A673 (cell line): ENCODE measurements at regions of chr7 and their contacts with region 1.

Region 1: GRCh38 chr7:94657771-94658693 is 2.1 kb upstream of the SGCE start:
- DNase-seq: peak; percentile 97
- H3K4me3 ChIP-seq: peak overlapping the region; percentile 63
- H3K27ac ChIP-seq: no peak overlapping the region
- H3K4me1 ChIP-seq: peaks cover 22% of the 10 kb centered on the region
- H3K27me3 ChIP-seq: no peaks in the 10 kb centered on the region
- CTCF ChIP-seq: no peak

Region 2: GRCh38 chr7:94289071-94289470 is 369.0 kb before region 1 on chr7:
- CTCF ChIA-PET with region 1: interaction called, 6 read pairs
- POLR2A ChIA-PET with region 1: no interaction called
- intact Hi-C with region 1: loop called (anchors 10 kb)
- DNase-seq: peak; percentile 93
- H3K4me3 ChIP-seq: no peak overlapping the region
- H3K27ac ChIP-seq: no peak overlapping the region
- H3K4me1 ChIP-seq: peaks cover 11% of the 10 kb centered on the region
- H3K27me3 ChIP-seq: no peaks in the 10 kb centered on the region
- CTCF ChIP-seq: peak; percentile 97

Region 3: DNA sequence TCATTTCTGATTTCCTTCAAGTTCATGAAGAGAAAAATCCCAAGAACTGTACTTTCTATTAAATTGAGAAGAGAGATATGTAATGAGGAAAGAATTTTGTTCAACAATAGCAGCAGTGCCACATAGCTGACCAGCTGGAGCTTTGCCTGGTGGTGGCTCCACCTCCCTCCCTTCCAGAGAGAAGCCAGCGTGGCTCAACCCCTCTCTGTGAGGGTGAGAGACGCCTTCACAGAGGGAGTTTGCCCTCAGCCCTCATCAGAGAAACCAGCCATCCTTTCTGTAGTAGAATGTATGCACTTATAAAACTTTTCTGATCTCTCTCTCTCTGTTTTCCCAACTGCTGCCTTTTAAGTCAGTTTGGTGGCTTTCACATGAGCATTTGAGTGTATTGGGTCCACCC is 283.8 kb before region 1 on chr7:
- CTCF ChIA-PET with region 1: no interaction called
- POLR2A ChIA-PET with region 1: no interaction called
- intact Hi-C with region 1: no loop called
- DNase-seq: peak; percentile 79
- H3K4me3 ChIP-seq: no peak overlapping the region
- H3K27ac ChIP-seq: peak overlapping the region; percentile 98
- H3K4me1 ChIP-seq: peaks cover 44% of the 10 kb centered on the region
- H3K27me3 ChIP-seq: no peaks in the 10 kb centered on the region
- CTCF ChIP-seq: no peak

Region 4: DNA sequence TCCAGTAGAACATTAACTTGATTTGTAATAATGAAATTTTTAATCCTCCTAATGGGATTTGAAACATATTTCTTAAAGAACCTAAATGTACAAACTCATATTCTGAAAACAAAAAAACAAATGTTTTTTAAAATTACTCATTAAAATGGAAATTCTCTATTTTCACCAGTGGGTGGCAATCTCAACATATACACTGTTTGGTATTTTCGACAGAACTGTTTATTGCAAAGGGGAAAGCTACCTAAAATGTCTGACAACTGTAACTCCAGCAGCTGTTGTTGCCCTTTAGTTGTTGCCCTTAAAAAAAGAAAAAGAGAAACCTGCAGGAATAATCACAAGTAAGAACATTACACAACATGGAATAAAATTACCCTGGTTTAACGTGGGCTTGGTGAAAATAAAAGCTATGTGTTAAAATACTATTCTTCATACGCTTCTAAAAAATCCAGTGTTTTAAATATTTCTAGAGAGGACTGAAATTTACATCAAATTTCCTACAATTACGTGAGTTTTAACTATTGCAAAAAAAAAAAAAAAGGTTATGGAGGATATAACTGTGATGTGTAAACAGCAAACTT is 208.8 kb before region 1 on chr7:
- CTCF ChIA-PET with region 1: interaction called, 10 read pairs
- POLR2A ChIA-PET with region 1: no interaction called
- intact Hi-C with region 1: loop called (anchors 2 kb)
- DNase-seq: peak; percentile 71
- H3K4me3 ChIP-seq: no peak overlapping the region
- H3K27ac ChIP-seq: no peak overlapping the region
- H3K4me1 ChIP-seq: peaks cover 15% of the 10 kb centered on the region
- H3K27me3 ChIP-seq: no peaks in the 10 kb centered on the region
- CTCF ChIP-seq: peak; percentile 75

Region 5: GRCh38 chr7:94509879-94510581 is 148.0 kb before region 1 on chr7:
- CTCF ChIA-PET with region 1: no interaction called
- POLR2A ChIA-PET with region 1: no interaction called
- intact Hi-C with region 1: loop called (anchors 5 kb)
- DNase-seq: peak; percentile 75
- H3K4me3 ChIP-seq: peak overlapping the region; percentile 68
- H3K27ac ChIP-seq: peak overlapping the region; percentile 99
- H3K4me1 ChIP-seq: peaks cover 35% of the 10 kb centered on the region
- H3K27me3 ChIP-seq: no peaks in the 10 kb centered on the region
- CTCF ChIP-seq: peak; percentile 33; the same call in 1 of the 2 replicates

Region 6: GRCh38 chr7:94907026-94907810 is 249.2 kb after region 1 on chr7 and contains the start of gene PPP1R9A:
- CTCF ChIA-PET with region 1: no interaction called
- POLR2A ChIA-PET with region 1: no interaction called
- intact Hi-C with region 1: loop called (anchors 2 kb)
- DNase-seq: peak; percentile 63
- H3K4me3 ChIP-seq: peak within 1 kb of the TSS; percentile 66
- H3K27ac ChIP-seq: peak within 1 kb of the TSS; percentile 75
- H3K4me1 ChIP-seq: peaks cover 9% of the 10 kb centered on the region
- H3K27me3 ChIP-seq: no peaks in the 10 kb centered on the region
- CTCF ChIP-seq: peak; percentile 39
- total RNA-seq, gene PPP1R9A: 13.3 and 15.6 TPM in 2 replicates

Region 7: GRCh38 chr7:95045236-95045923 is 387.3 kb after region 1 on chr7:
- CTCF ChIA-PET with region 1: no interaction called
- POLR2A ChIA-PET with region 1: no interaction called
- intact Hi-C with region 1: loop called (anchors 2 kb)
- DNase-seq: peak; percentile 72
- H3K4me3 ChIP-seq: no peak overlapping the region
- H3K27ac ChIP-seq: no peak overlapping the region
- H3K4me1 ChIP-seq: peaks cover 18% of the 10 kb centered on the region
- H3K27me3 ChIP-seq: no peaks in the 10 kb centered on the region
- CTCF ChIP-seq: peak; percentile 65

Region 8: DNA sequence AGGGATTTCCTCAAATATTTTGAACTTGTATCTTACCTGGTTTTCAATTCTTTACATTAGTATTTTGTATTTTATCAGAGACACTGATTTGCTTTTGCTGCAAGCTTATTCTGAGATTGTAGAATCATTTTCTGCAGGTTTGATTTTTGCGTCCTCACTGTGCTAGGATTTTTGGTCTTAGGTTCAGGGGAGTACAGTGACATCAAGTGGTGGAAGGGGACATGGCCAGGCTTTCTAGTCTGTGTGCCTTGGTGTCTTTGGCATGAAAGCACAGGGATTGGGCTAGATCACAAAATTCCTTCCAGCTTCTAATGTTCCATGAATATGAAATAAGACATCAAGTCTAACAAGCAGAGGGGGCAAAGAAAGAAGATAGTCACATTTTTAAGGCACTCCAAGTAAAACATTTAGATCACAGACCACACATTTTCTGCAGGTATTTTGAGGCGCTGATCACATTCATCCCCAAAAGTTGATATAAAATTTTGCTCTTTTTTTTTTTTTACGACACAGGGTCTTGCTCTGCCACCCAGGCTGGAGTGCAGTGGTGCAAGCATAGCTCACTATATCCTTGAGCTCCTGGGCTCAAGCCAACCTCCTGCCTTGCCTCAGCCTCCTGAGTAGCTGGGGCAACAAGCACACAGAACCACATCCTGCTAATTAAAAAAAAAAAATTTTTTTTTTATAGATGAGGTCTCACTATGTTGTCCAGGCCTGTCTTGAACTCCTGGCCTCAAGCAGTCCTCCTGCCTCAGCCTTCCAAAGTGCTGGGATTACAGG is 541.9 kb after region 1 on chr7:
- CTCF ChIA-PET with region 1: no interaction called
- POLR2A ChIA-PET with region 1: no interaction called
- intact Hi-C with region 1: loop called (anchors 5 kb)
- DNase-seq: peak; percentile 71
- H3K4me3 ChIP-seq: no peak overlapping the region
- H3K27ac ChIP-seq: no peak overlapping the region
- H3K4me1 ChIP-seq: no peaks in the 10 kb centered on the region
- H3K27me3 ChIP-seq: no peaks in the 10 kb centered on the region
- CTCF ChIP-seq: peak; percentile 80